Activated T-helper 1 cell treated with anti-CD3 and anti-CD28 coated beads, Interleukin-12 subunit alpha, Interleukin-12 subunit beta, Interleukin-2, Interleukin-4 antibody, amounts not matched to agents 30 ng/mL and 10 ng/mL and 1 ng/mL, durations not matched to agents 14 hours and 24 hours and 36 hours (primary cell): ENCODE measurements at regions of chr5 and their contacts with region 1.

Region 1: DNA sequence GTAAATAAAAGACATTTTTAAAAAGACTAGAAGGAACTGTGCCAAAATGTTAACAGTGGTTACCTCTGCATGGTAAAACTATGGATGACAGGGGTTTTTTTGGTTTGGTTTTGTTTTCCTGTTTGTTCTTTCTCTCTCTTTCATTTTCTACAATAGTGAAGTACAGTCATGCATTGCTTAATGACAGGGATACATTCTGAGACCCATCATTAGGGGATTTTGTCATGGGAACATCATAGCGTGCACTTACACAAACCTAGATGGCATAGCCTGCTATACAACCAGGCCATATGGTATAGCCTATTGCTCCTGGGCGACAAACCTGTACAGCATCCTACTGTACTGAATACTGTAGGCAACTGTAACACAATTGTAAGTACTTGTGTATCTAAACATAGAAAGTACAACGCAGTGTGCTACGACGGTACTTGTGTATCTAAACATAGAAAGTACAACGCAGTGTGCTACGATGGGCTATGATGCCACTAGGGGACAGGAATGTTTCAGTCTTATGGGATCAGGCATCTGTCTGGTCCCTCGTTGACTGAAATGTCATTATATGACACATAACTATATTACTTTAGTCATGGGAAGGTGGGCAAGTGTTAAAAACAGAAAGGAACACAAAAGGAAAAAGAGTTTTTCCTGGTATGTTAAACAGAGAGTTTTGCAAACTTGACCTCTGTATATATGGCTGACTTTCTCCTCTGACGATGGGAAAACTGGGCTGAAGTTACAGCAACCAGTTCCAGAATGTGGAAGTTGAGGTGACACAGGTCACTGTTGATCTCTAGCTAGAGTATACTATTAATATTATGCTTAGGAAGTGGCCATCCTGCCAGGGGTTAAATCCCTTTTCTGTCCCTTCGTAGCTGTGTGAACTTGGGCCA is 7.4 kb upstream of the ADAM19 start:
- DNase-seq: no peak
- H3K4me3 Mint-ChIP-seq: peak overlapping the region; percentile 48
- H3K27ac Mint-ChIP-seq: peak overlapping the region; percentile 80
- H3K4me1 Mint-ChIP-seq: peaks cover 69% of the 10 kb centered on the region
- H3K27me3 Mint-ChIP-seq: no peaks in the 10 kb centered on the region

Region 2: DNA sequence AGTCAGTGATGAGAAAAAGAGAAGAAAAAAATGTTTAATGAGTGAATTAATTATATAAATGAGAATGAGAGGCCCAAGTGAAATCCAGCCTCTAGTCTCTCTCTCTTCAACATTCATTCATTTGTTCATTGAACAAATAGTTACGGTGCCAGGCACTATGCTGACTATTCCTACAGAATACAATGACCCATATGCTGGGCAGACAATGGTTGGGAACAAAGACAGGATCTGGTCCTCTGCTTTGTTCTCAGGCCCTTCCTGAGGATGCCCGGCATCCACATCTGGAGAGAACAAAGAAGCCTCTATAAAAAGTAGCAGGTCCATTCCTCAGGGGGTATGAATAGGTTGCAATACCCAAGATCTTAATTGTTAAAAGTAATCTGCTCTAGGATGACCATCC is 14.3 kb before region 1 on chr5:
- intact Hi-C with region 1: no loop called
- DNase-seq: no peak
- H3K4me3 Mint-ChIP-seq: peak overlapping the region; percentile 71
- H3K27ac Mint-ChIP-seq: peak overlapping the region; percentile 93
- H3K4me1 Mint-ChIP-seq: peaks cover 79% of the 10 kb centered on the region
- H3K27me3 Mint-ChIP-seq: no peaks in the 10 kb centered on the region

Region 3: DNA sequence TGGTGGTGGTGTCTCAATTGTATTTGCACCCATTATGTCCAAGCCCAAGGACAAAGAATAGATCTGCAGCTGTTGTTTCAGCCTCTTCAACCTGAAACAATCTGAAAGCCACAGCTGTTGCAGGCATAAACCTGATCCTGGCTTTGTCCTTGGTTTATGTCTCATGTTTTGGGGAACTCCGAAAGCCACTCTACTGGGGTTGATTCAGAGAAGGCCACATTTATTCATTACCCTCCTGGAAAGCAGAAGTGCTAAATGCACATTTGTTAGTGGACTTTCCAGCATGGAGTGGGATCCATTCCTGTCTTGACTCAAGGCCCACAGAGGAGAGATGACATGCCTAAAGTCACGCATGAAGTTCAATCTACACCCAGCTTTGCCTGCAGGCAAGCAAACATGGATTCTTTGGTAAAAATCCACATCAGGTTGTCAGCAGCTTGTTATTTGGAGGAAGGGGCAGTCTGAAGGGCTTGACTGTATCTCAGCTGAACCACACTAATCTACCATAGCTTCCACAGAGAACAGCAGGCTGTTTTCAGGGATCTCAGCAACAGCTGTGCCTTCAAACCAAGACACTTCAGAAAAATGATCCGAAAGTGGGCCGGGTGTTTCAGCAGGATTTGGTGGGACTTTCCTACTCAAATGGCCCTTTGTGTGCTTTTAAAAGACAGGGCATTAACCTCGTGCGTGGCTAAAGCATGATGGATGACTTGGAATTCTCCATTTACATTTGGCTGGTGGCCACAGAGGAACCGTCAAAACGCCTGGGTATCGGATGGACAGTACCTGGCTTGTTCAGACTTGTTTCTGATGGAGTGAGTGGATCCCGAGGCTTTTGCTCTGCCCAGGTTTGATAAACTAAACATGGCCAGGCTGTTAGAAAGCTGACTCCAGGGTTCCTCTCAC is 28.8 kb after region 1 on chr5:
- intact Hi-C with region 1: loop called (anchors 1 kb)
- DNase-seq: no peak
- H3K4me3 Mint-ChIP-seq: peak overlapping the region; percentile 21
- H3K27ac Mint-ChIP-seq: peak overlapping the region; percentile 55
- H3K4me1 Mint-ChIP-seq: peaks cover 70% of the 10 kb centered on the region
- H3K27me3 Mint-ChIP-seq: no peaks in the 10 kb centered on the region

Region 4: DNA sequence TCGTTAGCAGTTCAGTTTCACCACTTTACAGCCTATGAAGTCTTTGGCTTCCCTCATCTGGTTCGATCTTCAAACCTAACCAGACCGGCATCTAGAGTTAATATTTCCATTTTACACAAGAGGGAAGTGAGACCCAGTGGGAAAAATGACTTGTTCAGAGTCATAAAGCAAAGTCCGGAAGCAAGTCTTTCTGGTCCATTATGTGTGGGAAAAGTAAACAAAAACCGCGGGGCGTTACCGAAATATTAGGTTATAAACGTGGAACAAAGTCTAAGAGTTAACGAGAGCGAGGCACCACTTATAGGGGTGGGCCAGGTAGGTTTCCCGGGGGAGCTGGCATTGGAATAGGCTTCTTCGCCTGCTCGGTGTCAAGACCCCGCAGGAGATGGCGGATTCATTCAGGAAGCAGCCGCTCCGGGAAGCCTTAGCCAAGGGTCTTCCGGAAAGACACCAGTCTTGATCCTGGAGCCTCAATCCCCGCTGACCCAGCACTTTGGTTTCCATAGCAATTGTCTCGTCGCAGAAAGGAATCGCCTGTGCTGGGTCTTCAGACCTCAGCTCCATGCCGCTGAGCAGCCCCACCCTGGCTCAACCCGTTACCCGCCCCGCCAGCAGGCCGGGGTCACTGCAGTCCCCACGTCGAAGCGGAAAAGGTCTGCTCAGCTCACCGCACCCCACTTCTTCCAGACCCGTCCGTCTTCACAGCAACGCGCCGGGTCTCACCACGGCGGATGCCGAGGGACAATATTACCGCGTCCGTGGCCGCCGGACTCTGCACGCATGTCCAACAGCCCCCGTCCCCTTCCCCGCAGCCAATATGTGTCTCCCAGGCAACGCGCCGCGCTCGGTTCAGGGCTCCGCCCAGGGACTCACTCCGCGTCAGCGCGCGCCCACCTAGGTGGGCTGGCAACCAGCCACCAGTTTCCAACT is 88.0 kb after region 1 on chr5 and contains the start of gene C5orf52:
- intact Hi-C with region 1: no loop called
- DNase-seq: no peak
- H3K4me3 Mint-ChIP-seq: peak within 1 kb of the TSS; percentile 93
- H3K27ac Mint-ChIP-seq: peak within 1 kb of the TSS; percentile 82
- H3K4me1 Mint-ChIP-seq: peaks cover 42% of the 10 kb centered on the region
- H3K27me3 Mint-ChIP-seq: peaks cover 2% of the 10 kb centered on the region
- total RNA-seq, gene C5orf52: 0.39 TPM in 1 of 2 replicates, not detected in the other